Activated naive CD4-positive, alpha-beta T cell treated with anti-CD3 and anti-CD28 coated beads for 36 hours (primary cell): ENCODE measurements at regions of chr12 and their contacts with region 1.

Region 1: DNA sequence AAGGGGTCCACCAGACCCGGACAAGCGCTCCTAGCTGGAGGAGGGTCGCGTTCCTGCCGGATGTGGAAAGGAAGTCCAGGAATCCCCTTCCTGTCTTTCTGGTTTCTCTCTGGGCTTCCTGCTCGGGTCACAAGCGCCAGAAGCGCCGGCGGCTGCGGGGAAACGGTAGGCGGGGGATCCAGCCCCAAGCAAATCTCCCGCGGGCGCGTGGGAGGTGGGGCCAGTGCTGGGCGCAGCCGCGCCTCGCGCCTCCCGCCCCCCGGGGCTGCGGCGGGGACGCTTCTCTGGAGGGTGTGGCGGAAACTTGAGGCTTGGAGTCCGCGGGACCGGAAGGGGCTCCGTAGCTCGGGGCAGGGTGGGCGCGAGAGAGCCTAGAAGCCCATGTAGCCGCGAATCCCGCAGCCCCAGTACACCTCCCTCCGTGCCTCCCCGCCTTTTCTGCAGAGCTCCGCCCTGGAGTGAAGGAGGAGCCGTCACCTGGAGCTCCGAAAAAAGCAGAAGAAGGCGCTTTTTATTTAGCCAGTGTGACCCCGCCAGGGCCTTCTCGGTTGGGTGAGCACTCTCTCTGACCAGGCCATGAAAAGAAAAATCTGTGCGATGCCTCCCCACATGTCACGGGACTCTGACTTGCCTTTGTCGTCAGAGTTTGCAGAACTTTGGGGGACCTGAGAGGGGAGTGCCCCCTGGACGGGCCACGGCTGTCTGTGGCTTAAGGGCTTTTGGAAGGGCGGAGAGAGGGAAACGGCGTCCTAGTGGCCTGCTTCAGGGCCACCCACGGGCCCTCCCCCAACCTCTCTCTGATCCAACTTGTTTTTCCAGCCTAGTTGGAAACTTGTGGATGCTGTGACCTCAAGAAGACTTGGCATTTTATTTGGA is 21.4 kb upstream of the CLEC2D start:
- DNase-seq: peak; percentile 93
- H3K4me3 Mint-ChIP-seq: peak overlapping the region; percentile 95
- H3K27ac Mint-ChIP-seq: peak overlapping the region; percentile 99
- H3K4me1 Mint-ChIP-seq: peaks cover 47% of the 10 kb centered on the region
- H3K27me3 Mint-ChIP-seq: no peaks in the 10 kb centered on the region

Region 2: GRCh38 chr12:9634177-9634803 is 13.8 kb before region 1 on chr12:
- CTCF ChIA-PET with region 1: interaction called, 7 read pairs
- intact Hi-C with region 1: loop called (anchors 1 kb)
- DNase-seq: peak; percentile 95
- H3K4me3 Mint-ChIP-seq: peak overlapping the region; percentile 55
- H3K27ac Mint-ChIP-seq: peak overlapping the region; percentile 90
- H3K4me1 Mint-ChIP-seq: peaks cover 56% of the 10 kb centered on the region
- H3K27me3 Mint-ChIP-seq: no peaks in the 10 kb centered on the region

Region 3: GRCh38 chr12:9673404-9674225 is 25.6 kb after region 1 on chr12:
- CTCF ChIA-PET with region 1: interaction called, 10 read pairs
- intact Hi-C with region 1: no loop called
- DNase-seq: peak; percentile 84
- H3K4me3 Mint-ChIP-seq: peak overlapping the region; percentile 90
- H3K27ac Mint-ChIP-seq: peak overlapping the region; percentile 97
- H3K4me1 Mint-ChIP-seq: peaks cover 35% of the 10 kb centered on the region
- H3K27me3 Mint-ChIP-seq: no peaks in the 10 kb centered on the region

Region 4: DNA sequence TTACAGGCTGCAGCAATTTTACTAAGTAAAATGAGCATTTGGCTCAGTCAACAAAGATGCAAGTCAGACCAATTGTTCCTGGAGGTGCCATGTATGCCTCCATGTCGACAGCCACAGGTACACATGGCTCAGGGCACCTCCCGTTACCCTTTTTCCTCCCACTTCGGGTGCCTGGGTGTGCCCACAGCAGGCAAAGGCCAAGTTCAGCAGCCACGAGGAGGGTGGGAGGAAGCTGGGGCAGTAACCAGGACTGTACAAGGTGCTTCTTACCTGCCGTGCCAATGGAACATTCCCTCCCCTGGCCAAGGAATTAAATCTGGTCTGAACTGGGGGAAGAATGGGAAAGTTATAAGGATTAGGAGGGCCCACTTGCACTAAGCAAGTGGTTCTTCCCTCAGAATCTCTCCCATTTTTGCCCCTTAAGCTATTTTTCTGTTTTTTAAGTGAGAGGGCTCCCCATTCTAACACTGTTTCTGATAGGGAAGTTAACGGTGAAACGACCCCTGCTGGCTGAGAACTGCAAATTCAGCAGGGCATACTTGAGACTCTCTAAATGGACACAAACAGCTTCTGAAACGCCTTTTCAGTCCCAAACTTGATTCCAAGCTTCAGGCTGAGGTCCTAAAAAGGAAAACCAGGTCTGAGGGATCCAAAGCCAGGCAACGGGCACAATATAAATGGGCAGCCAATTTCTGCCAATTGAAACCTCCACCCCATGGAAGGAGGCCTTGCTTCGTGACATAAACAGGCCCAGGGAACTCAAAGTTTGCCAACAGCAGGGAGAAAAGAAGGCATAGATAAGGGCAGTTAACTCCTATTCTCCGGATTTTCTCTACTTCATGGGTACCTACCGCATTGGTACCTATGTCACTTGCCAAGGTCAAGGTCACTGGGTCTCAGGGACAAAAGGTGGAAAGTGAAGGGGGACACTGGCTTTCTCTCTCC is 60.1 kb after region 1 on chr12:
- CTCF ChIA-PET with region 1: interaction called, 5 read pairs
- intact Hi-C with region 1: loop called (anchors 1 kb)
- DNase-seq: peak; percentile 86
- H3K4me3 Mint-ChIP-seq: peak overlapping the region; percentile 70
- H3K27ac Mint-ChIP-seq: peak overlapping the region; percentile 92
- H3K4me1 Mint-ChIP-seq: peaks cover 50% of the 10 kb centered on the region
- H3K27me3 Mint-ChIP-seq: no peaks in the 10 kb centered on the region

Region 5: DNA sequence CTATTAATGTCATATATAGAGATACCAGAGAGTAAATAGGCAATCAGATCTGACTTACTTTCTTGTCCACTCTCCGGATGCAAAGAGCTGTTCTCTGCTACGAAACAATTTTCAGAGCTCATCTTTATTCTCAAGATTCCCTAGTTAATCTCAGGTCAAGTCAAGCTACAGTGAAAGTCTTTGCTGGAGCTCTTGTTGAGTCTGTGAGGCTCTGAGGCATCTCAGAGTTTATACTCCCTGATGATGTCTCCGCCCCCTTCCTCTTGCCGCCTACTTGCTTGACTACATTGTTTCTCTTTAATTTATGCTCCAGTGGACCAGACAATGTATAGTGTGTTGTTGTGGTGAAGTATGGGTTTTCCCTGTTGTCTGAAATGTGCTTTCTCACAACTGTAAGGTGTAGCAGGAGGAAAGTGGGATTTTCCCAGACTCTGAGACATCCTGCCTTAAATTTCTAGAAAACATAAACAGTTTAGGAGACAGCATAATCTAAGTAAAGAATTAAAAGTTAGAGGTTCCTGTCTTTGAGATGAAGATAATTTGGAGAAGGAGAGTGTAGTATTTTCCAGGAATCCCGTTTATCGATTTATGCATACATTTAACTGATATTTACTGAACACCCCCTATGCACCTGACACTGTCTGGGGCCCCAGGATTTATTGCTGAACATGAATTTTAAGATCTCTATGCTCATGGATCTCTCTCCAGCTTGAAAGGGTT is 112.8 kb after region 1 on chr12 and contains the start of gene CD69:
- CTCF ChIA-PET with region 1: interaction called, 4 read pairs
- intact Hi-C with region 1: loop called (anchors 1 kb)
- DNase-seq: peak; percentile 88
- H3K4me3 Mint-ChIP-seq: peak within 1 kb of the TSS; percentile 95
- H3K27ac Mint-ChIP-seq: peak within 1 kb of the TSS; percentile 99
- H3K4me1 Mint-ChIP-seq: peaks cover 36% of the 10 kb centered on the region
- H3K27me3 Mint-ChIP-seq: no peaks in the 10 kb centered on the region
- total RNA-seq, gene CD69: 150 to 153 TPM